ENCODE measurements at regions of chr17 and their contacts with region 1.

Region 1: GRCh38 chr17:63842540-63843386 is at the start of gene SMARCD2:
- DNase-seq: peak; percentile 90
- ATAC-seq: peak; percentile 90
- H3K4me3 ChIP-seq: peak within 1 kb of the TSS; percentile 97
- H3K27ac ChIP-seq: peak within 1 kb of the TSS; percentile 80
- H3K4me1 ChIP-seq: peaks cover 18% of the 10 kb centered on the region
- H3K27me3 ChIP-seq: no peaks in the 10 kb centered on the region
- CTCF ChIP-seq: no peak
- EP300 ChIP-seq: peak; percentile 16 to 58; a peak in 2 of 4 replicates
- POLR2A ChIP-seq: peak; percentile 92
- RAD21 ChIP-seq: no peak
- polyA plus RNA-seq, gene SMARCD2: 2.4 to 5.6 TPM

Region 2: GRCh38 chr17:63741221-63742049 is 101.3 kb before region 1 on chr17 and contains the start of gene STRADA:
- CTCF ChIA-PET with region 1: interaction called, 5 read pairs
- POLR2A ChIA-PET with region 1: interaction called, 17 read pairs
- RAD21 ChIA-PET with region 1: no interaction called
- SMC1A ChIA-PET with region 1: no interaction called
- in situ Hi-C with region 1: no loop called
- intact Hi-C with region 1: loop called (anchors 2 kb)
- DNase-seq: peak; percentile 95
- ATAC-seq: peak; percentile 90
- H3K4me3 ChIP-seq: peak within 1 kb of the TSS; percentile 96
- H3K27ac ChIP-seq: peak within 1 kb of the TSS; percentile 97
- H3K4me1 ChIP-seq: peaks cover 11% of the 10 kb centered on the region
- H3K27me3 ChIP-seq: no peaks in the 10 kb centered on the region
- CTCF ChIP-seq: no peak
- EP300 ChIP-seq: peak; percentile 55 to 74; a peak in 3 of 4 replicates
- POLR2A ChIP-seq: peak; percentile 98
- RAD21 ChIP-seq: no peak
- polyA plus RNA-seq, gene STRADA: 13.3 to 15.6 TPM

Region 3: GRCh38 chr17:63773381-63774140 is 69.2 kb before region 1 on chr17 and contains the start of gene CCDC47:
- CTCF ChIA-PET with region 1: no interaction called
- POLR2A ChIA-PET with region 1: interaction called, 24 read pairs
- RAD21 ChIA-PET with region 1: interaction called, 4 read pairs
- SMC1A ChIA-PET with region 1: interaction called, 3 read pairs
- in situ Hi-C with region 1: no loop called
- intact Hi-C with region 1: loop called (anchors 5 kb)
- DNase-seq: peak; percentile 98
- ATAC-seq: peak; percentile 90
- H3K4me3 ChIP-seq: peak within 1 kb of the TSS; percentile 100
- H3K27ac ChIP-seq: peak within 1 kb of the TSS; percentile 84
- H3K4me1 ChIP-seq: peaks cover 3% of the 10 kb centered on the region
- H3K27me3 ChIP-seq: no peaks in the 10 kb centered on the region
- CTCF ChIP-seq: no peak
- EP300 ChIP-seq: peak in 1 of 2 experiments; percentile 52; a peak in 1 of 4 replicates
- POLR2A ChIP-seq: peak; percentile 96
- RAD21 ChIP-seq: no peak
- polyA plus RNA-seq, gene CCDC47: 13.6 to 17.4 TPM

Region 4: DNA sequence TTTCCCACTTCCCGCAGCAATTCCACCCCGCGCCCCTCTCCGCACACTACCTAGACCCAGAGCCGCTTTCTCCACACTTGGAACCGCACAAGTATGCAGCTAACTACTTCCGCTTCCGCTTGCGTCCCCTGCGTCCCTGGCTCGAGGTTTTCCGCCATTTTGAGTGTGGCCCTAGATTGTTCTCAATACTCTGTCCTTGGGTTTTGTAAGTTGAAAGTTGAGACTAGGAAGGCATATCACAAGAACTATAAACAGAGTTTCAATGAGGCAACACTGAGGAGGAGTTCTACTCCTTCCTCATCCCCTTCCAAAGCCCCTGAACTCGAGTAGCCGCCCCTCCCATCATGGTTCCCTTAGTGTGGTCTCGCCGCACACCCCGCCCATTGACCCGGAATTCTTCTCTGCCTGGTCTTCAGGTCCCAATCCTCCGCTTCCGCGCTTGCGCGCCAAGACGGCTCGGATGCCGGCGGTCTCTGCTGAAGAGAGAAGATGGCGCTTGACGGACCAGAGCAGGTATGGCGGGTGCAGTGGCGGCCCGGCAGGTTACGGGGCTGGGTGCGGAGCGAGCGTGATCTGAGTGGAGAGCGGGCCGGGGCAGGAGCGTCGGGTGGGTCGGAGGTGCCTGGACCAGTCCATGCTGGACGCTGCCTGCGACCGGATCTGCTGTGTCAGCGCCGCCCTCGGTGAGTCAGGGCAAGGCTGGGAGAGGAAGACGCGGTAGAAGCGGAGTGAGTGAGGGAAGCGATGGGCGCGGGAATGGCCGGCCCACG is 15.6 kb before region 1 on chr17 and contains the starts of genes FTSJ3 and PSMC5:
- CTCF ChIA-PET with region 1: interaction called, 19 read pairs
- POLR2A ChIA-PET with region 1: interaction called, 16 read pairs
- RAD21 ChIA-PET with region 1: interaction called, 5 read pairs
- SMC1A ChIA-PET with region 1: interaction called, 8 read pairs
- in situ Hi-C with region 1: no loop called
- intact Hi-C with region 1: loop called (anchors 1 kb)
- DNase-seq: peak; percentile 84
- ATAC-seq: peak; percentile 95
- H3K4me3 ChIP-seq: peak within 1 kb of the TSS; percentile 83
- H3K27ac ChIP-seq: peak within 1 kb of the TSS; percentile 95
- H3K4me1 ChIP-seq: peaks cover 17% of the 10 kb centered on the region
- H3K27me3 ChIP-seq: no peaks in the 10 kb centered on the region
- CTCF ChIP-seq: peak; percentile 60 to 73 (median 61)
- EP300 ChIP-seq: no peak
- POLR2A ChIP-seq: peak; percentile 99
- RAD21 ChIP-seq: no peak
- polyA plus RNA-seq, gene FTSJ3: 17.2 to 34.2 TPM
- polyA plus RNA-seq, gene PSMC5: 115 to 266 TPM

Region 5: GRCh38 chr17:63859257-63859656 is 16.5 kb after region 1 on chr17:
- CTCF ChIA-PET with region 1: interaction called, 51 read pairs
- POLR2A ChIA-PET with region 1: interaction called, 6 read pairs
- RAD21 ChIA-PET with region 1: no interaction called
- SMC1A ChIA-PET with region 1: interaction called, 4 read pairs
- in situ Hi-C with region 1: no loop called
- intact Hi-C with region 1: no loop called
- DNase-seq: no peak
- ATAC-seq: no peak
- H3K4me3 ChIP-seq: no peak overlapping the region
- H3K27ac ChIP-seq: no peak overlapping the region
- H3K4me1 ChIP-seq: no peaks in the 10 kb centered on the region
- H3K27me3 ChIP-seq: peaks cover 1 to 4% of the 10 kb centered on the region in 2 experiments; a peak in 2 of 4 replicates
- CTCF ChIP-seq: no peak
- EP300 ChIP-seq: no peak
- POLR2A ChIP-seq: no peak
- RAD21 ChIP-seq: no peak

Region 6: GRCh38 chr17:63939884-63940283 is 97.1 kb after region 1 on chr17:
- CTCF ChIA-PET with region 1: no interaction called
- POLR2A ChIA-PET with region 1: no interaction called
- RAD21 ChIA-PET with region 1: no interaction called
- SMC1A ChIA-PET with region 1: no interaction called
- in situ Hi-C with region 1: no loop called
- intact Hi-C with region 1: no loop called
- DNase-seq: no peak
- ATAC-seq: no peak
- H3K4me3 ChIP-seq: no peak overlapping the region
- H3K27ac ChIP-seq: no peak overlapping the region
- H3K4me1 ChIP-seq: no peaks in the 10 kb centered on the region
- H3K27me3 ChIP-seq: no peaks in the 10 kb centered on the region
- CTCF ChIP-seq: no peak
- EP300 ChIP-seq: no peak
- POLR2A ChIP-seq: no peak
- RAD21 ChIP-seq: no peak

Region 7: DNA sequence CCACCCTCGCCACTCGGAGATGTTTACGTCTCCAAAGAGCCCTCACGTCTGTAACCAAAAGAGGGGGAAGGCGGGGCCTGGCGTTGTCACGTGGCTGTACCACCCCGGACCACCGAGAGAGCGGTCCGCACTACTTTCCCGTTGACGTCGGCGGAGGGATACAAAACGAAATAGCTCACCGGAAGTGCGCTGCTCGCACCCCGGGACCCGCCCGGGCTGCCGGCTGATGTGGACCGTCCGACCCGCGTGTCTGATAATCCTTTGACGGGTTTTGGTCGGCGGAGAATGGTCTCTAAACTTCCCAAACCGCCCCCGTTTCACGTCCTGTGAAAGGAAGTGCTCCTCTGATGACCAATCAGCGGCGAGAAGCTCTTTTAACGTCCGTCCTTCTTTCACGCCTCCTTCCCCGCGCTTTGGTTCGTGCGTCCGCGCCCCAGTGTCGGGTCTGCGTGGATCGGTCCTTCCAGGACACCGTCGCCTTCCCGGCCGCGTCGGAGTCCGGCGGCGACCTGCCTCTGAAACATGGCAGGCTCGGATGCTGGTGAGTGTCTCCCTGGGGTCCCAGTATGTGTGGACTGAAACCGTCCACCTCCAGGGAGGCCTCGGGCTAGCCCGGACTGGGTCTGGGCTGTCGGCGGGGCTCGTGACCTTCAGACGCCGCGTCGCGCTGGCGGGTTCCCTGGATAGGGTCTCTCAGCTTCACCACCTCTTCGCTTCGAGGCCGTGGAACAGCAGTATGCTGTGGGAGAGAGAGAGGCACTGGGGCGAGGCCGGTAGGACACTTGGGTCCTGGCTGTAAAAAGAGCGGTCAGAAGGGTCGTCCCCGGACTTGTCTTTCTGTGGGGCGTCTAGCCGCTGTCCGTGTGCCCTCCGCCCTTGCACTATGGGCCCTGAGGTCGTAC is 664.1 kb after region 1 on chr17 and contains the start of gene CEP95:
- CTCF ChIA-PET with region 1: no interaction called
- POLR2A ChIA-PET with region 1: no interaction called
- RAD21 ChIA-PET with region 1: no interaction called
- SMC1A ChIA-PET with region 1: no interaction called
- in situ Hi-C with region 1: loop called (anchors 10 kb)
- intact Hi-C with region 1: no loop called
- DNase-seq: peak; percentile 90
- ATAC-seq: peak; percentile 75
- H3K4me3 ChIP-seq: peak within 1 kb of the TSS; percentile 100
- H3K27ac ChIP-seq: peak within 1 kb of the TSS; percentile 100
- H3K4me1 ChIP-seq: peaks cover 4% of the 10 kb centered on the region; the same call in 1 of the 2 replicates
- H3K27me3 ChIP-seq: no peaks in the 10 kb centered on the region
- CTCF ChIP-seq: no peak
- EP300 ChIP-seq: 0 out of 4 replicates have a peak, but pooled peaks have one; percentile 9 to 20
- POLR2A ChIP-seq: peak; percentile 90
- RAD21 ChIP-seq: no peak
- polyA plus RNA-seq, gene CEP95: 17.7 to 22.6 TPM